ENCODE measurements at regions of chr22 and their contacts with region 1.

Region 1: GRCh38 chr22:28594797-28595462 is 84.7 kb downstream of the TTC28 start:
- DNase-seq: no peak
- ATAC-seq: peak; percentile 87 to 97 (median 92)
- H3K4me3 ChIP-seq: no peak overlapping the region
- H3K27ac ChIP-seq: no peak overlapping the region
- H3K4me1 ChIP-seq: no peaks in the 10 kb centered on the region
- H3K27me3 ChIP-seq: no peaks in the 10 kb centered on the region
- CTCF ChIP-seq: peak; percentile 81

Region 2: GRCh38 chr22:27880778-27881394 is 714.0 kb before region 1 on chr22:
- intact Hi-C with region 1: loop called in 1 of 2 experiments (anchors 10 kb)
- DNase-seq: no peak
- ATAC-seq: peak; percentile 67 to 86 (median 76)
- H3K4me3 ChIP-seq: no peak overlapping the region
- H3K27ac ChIP-seq: no peak overlapping the region
- H3K4me1 ChIP-seq: peaks cover 25% of the 10 kb centered on the region
- H3K27me3 ChIP-seq: no peaks in the 10 kb centered on the region
- CTCF ChIP-seq: peak; percentile 80

Region 3: DNA sequence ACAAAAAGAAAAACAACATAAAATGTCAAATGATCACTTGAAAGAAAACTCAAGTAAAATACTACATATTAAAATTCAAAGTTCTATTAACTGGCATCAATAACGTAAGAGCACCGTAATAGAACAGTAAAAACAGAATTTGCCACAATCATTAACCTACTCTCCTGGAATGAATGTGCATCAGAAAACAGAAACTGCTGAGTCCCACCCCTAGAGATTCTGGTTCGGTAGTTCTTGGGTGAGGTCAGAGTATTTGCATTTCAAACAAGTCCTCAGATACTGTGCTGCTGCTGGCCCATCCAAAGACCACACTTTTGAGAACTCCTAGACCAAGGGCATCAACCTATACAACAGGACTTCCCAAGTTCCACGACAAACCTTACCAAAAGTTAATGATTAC is 699.3 kb before region 1 on chr22:
- intact Hi-C with region 1: loop called in 1 of 2 experiments (anchors 10 kb)
- DNase-seq: no peak
- ATAC-seq: no peak
- H3K4me3 ChIP-seq: no peak overlapping the region
- H3K27ac ChIP-seq: no peak overlapping the region
- H3K4me1 ChIP-seq: peaks cover 6% of the 10 kb centered on the region
- H3K27me3 ChIP-seq: no peaks in the 10 kb centered on the region
- CTCF ChIP-seq: no peak

Region 4: GRCh38 chr22:28019881-28020871 is 574.8 kb before region 1 on chr22:
- intact Hi-C with region 1: loop called (anchors 2 to 10 kb)
- DNase-seq: peak; percentile 82 to 90
- ATAC-seq: peak; percentile 71 to 82 (median 73)
- H3K4me3 ChIP-seq: no peak overlapping the region
- H3K27ac ChIP-seq: peak overlapping the region; percentile 91
- H3K4me1 ChIP-seq: peaks cover 48% of the 10 kb centered on the region
- H3K27me3 ChIP-seq: no peaks in the 10 kb centered on the region
- CTCF ChIP-seq: peak; percentile 97

Region 5: GRCh38 chr22:28051787-28052356 is 543.1 kb before region 1 on chr22:
- intact Hi-C with region 1: loop called (anchors 2 kb)
- DNase-seq: peak; percentile 72 to 88
- ATAC-seq: peak; percentile 67 to 84 (median 76)
- H3K4me3 ChIP-seq: no peak overlapping the region
- H3K27ac ChIP-seq: no peak overlapping the region
- H3K4me1 ChIP-seq: no peaks in the 10 kb centered on the region
- H3K27me3 ChIP-seq: no peaks in the 10 kb centered on the region
- CTCF ChIP-seq: peak; percentile 92

Region 6: GRCh38 chr22:28574159-28574788 is 20.7 kb before region 1 on chr22:
- intact Hi-C with region 1: no loop called
- DNase-seq: no peak
- ATAC-seq: no peak
- H3K4me3 ChIP-seq: no peak overlapping the region
- H3K27ac ChIP-seq: no peak overlapping the region
- H3K4me1 ChIP-seq: no peaks in the 10 kb centered on the region
- H3K27me3 ChIP-seq: no peaks in the 10 kb centered on the region
- CTCF ChIP-seq: no peak

Region 7: DNA sequence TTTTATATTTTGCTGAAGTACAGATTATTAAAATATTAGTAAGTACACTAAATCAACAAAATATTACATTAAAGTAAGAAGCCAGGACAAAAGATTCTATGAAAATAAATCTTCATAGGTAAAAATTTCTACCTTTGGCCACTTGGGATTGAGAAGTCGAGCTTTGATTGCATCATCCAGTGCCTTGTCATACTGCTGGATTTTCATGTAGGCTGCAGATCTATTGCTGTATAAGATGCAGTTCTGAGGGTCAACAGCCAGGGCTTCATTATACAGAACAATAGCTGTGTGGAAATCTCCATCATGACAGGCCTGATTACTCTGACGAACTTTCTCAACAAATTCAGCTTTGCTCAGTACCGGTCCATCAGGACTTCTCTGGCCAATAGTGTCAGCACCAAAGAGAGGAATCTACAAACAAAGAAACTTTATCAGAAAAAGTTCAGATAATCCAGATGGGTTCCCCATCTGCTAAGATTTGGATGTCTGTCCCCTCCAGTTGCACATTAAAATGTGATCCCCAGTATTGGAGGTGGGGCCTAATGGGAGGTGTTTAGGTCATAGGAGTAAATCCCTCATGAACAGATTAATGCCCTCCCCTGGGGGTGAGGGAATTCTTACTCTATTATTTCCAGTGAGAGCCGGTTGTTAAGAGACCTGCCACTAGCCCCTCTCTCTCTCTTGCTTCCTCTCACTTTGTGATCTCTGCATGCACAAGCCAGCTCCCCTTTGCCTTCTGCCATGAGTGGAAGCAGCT is 34.7 kb after region 1 on chr22:
- intact Hi-C with region 1: no loop called
- DNase-seq: no peak
- ATAC-seq: no peak
- H3K4me3 ChIP-seq: no peak overlapping the region
- H3K27ac ChIP-seq: no peak overlapping the region
- H3K4me1 ChIP-seq: no peaks in the 10 kb centered on the region
- H3K27me3 ChIP-seq: no peaks in the 10 kb centered on the region
- CTCF ChIP-seq: no peak

Measured in psoas muscle (tissue), 8 donors.